ENCODE measurements at regions of chr17 and their contacts with region 1.

Region 1: DNA sequence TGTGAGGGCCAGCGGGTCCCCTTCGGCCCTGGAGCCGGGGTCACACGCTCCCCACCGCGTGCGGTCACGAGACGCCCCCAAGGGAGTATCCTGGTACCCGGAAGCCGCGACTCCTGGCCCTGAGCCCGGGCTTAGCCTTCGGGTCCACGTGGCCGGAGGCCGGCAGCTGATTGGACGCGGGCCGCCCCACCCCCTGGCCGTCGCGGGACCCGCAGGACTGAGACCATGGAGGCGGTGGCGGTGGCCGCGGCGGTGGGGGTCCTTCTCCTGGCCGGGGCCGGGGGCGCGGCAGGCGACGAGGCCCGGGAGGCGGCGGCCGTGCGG is at the start of gene NAGLU:
- DNase-seq: peak; percentile 95 to 97
- ATAC-seq: peak; percentile 85 to 89
- H3K4me3 ChIP-seq: peak within 1 kb of the TSS; percentile 59 to 77 (median 61)
- H3K27ac ChIP-seq: peak within 1 kb of the TSS; percentile 77 to 95 (median 92)
- H3K4me1 ChIP-seq: peaks cover 6 to 20% of the 10 kb centered on the region in 2 donors
- H3K27me3 ChIP-seq: no peaks in the 10 kb centered on the region
- CTCF ChIP-seq: no peak
- POLR2A ChIP-seq: peak; percentile 92 to 96
- total RNA-seq, gene NAGLU: 16.4 to 30.1 (median 24.1) TPM

Region 2: GRCh38 chr17:42554250-42555121 is 18.5 kb after region 1 on chr17:
- in situ Hi-C with region 1: no loop called
- intact Hi-C with region 1: loop called (anchors 2 kb)
- DNase-seq: peak; percentile 76 to 78
- ATAC-seq: peak; percentile 89
- H3K4me3 ChIP-seq: peak overlapping the region; percentile 73 to 97 (median 94)
- H3K27ac ChIP-seq: peak overlapping the region; percentile 87 to 91 (median 90)
- H3K4me1 ChIP-seq: peaks cover 13 to 18% of the 10 kb centered on the region in 2 donors
- H3K27me3 ChIP-seq: no peaks in the 10 kb centered on the region
- CTCF ChIP-seq: no peak
- POLR2A ChIP-seq: peak; percentile 72

Measured in gastrocnemius medialis (tissue), 4 donors.